Activated CD8-positive, alpha-beta memory T cell treated with anti-CD3 and anti-CD28 coated beads, Interleukin-2, amount 10 ng/mL, durations not matched to agents 7 days and 5 days (primary cell): ENCODE measurements at regions of chr10 and their contacts with region 1.

Region 1: GRCh38 chr10:71285180-71285545 is 33.9 kb upstream of the SLC29A3 start:
- DNase-seq: peak; percentile 45
- ATAC-seq: peak; percentile 51
- H3K4me3 Mint-ChIP-seq: no peak overlapping the region
- H3K27ac Mint-ChIP-seq: no peak overlapping the region
- H3K4me1 Mint-ChIP-seq: no peaks in the 10 kb centered on the region
- H3K27me3 Mint-ChIP-seq: no peaks in the 10 kb centered on the region

Region 2: GRCh38 chr10:70830164-70830563 is 455.0 kb before region 1 on chr10:
- CTCF ChIA-PET with region 1: no interaction called
- DNase-seq: no peak
- ATAC-seq: no peak
- H3K4me3 Mint-ChIP-seq: no peak overlapping the region
- H3K27ac Mint-ChIP-seq: no peak overlapping the region
- H3K4me1 Mint-ChIP-seq: peaks cover 21% of the 10 kb centered on the region
- H3K27me3 Mint-ChIP-seq: no peaks in the 10 kb centered on the region

Region 3: GRCh38 chr10:71270301-71271220 is 14.6 kb before region 1 on chr10:
- CTCF ChIA-PET with region 1: interaction called, 15 read pairs
- DNase-seq: peak; percentile 62
- ATAC-seq: peak; percentile 70
- H3K4me3 Mint-ChIP-seq: no peak overlapping the region
- H3K27ac Mint-ChIP-seq: no peak overlapping the region
- H3K4me1 Mint-ChIP-seq: peaks cover 5% of the 10 kb centered on the region
- H3K27me3 Mint-ChIP-seq: no peaks in the 10 kb centered on the region